WTC11 (cell line): ENCODE measurements at regions of chr1 and their contacts with region 1.

Region 1: GRCh38 chr1:114386129-114387009 is 124.6 kb downstream of the TRIM33 start:
- DNase-seq: no peak
- ATAC-seq: peak; percentile 70
- H3K4me3 Mint-ChIP-seq: no peak overlapping the region
- H3K27ac Mint-ChIP-seq: peak overlapping the region; percentile 63; the same call in 1 of the 2 replicates
- H3K4me1 Mint-ChIP-seq: peaks cover 17% of the 10 kb centered on the region
- H3K27me3 Mint-ChIP-seq: peaks cover 2% of the 10 kb centered on the region; the same call in 1 of the 2 replicates
- CTCF ChIP-seq: no peak

Region 2: DNA sequence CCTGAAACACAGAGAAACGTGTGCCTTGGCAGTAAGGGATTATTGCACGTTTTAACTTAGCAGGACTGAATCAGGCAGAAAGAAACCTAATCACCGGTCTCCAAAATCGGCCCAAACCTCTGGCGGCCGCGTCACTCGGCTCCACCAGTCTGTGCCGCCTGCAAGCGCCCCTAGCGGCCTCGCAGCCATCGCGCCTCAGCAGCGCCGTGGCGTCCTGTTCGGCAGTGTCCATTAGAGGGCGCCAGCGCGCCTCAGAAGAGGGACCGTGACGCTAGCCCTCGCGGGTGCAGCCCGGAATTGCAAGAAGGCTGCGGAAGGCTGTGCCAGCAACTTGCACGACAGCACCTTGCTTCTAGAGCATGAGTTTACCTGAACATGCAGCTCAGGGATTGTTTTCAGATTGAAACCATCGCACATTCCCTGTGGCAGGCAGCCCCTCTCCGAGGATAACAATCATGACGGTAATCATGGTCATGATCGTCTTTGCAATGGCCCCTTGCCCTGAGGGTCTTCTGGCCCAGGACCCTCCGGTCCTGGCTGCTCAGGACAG is 39.8 kb before region 1 on chr1:
- CTCF ChIA-PET with region 1: interaction called, 15 read pairs
- POLR2A ChIA-PET with region 1: no interaction called
- DNase-seq: peak; percentile 98
- ATAC-seq: peak; percentile 92
- H3K4me3 Mint-ChIP-seq: peak overlapping the region; percentile 88
- H3K27ac Mint-ChIP-seq: peak overlapping the region; percentile 94
- H3K4me1 Mint-ChIP-seq: peaks cover 10% of the 10 kb centered on the region
- H3K27me3 Mint-ChIP-seq: peaks cover 17% of the 10 kb centered on the region
- CTCF ChIP-seq: peak; percentile 99

Region 3: GRCh38 chr1:114418247-114418646 is 31.9 kb after region 1 on chr1:
- CTCF ChIA-PET with region 1: no interaction called
- POLR2A ChIA-PET with region 1: no interaction called
- DNase-seq: no peak
- ATAC-seq: no peak
- H3K4me3 Mint-ChIP-seq: no peak overlapping the region
- H3K27ac Mint-ChIP-seq: 0 out of 2 replicates have a peak overlapping the region, but pooled peaks have one; percentile 20
- H3K4me1 Mint-ChIP-seq: no peaks in the 10 kb centered on the region
- H3K27me3 Mint-ChIP-seq: no peaks in the 10 kb centered on the region
- CTCF ChIP-seq: no peak

Region 4: DNA sequence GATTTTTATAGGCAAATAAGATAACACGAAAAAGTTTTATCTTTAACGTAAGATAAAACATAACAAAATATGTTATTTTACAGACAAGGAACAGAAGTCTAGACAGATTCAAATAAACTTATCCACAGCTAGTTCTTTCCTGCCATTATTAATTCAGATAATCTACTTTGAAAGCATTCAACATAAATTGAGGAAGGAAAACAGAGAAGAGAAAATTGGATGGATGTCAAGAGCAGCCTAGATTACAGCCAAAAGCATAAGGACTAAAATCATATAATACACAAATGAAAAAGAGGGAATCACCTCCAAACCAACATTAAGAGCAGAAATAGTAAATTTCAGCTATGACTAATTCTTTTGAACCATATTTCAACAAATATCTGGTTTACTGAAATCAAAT is 109.1 kb after region 1 on chr1:
- CTCF ChIA-PET with region 1: no interaction called
- POLR2A ChIA-PET with region 1: no interaction called
- DNase-seq: no peak
- ATAC-seq: no peak
- H3K4me3 Mint-ChIP-seq: no peak overlapping the region
- H3K27ac Mint-ChIP-seq: peak overlapping the region; percentile 76; the same call in 1 of the 2 replicates
- H3K4me1 Mint-ChIP-seq: peaks cover 18% of the 10 kb centered on the region; the same call in 1 of the 2 replicates
- H3K27me3 Mint-ChIP-seq: no peaks in the 10 kb centered on the region
- CTCF ChIP-seq: no peak